ENCODE measurements at regions of chr3 and their contacts with region 1.

Region 1: DNA sequence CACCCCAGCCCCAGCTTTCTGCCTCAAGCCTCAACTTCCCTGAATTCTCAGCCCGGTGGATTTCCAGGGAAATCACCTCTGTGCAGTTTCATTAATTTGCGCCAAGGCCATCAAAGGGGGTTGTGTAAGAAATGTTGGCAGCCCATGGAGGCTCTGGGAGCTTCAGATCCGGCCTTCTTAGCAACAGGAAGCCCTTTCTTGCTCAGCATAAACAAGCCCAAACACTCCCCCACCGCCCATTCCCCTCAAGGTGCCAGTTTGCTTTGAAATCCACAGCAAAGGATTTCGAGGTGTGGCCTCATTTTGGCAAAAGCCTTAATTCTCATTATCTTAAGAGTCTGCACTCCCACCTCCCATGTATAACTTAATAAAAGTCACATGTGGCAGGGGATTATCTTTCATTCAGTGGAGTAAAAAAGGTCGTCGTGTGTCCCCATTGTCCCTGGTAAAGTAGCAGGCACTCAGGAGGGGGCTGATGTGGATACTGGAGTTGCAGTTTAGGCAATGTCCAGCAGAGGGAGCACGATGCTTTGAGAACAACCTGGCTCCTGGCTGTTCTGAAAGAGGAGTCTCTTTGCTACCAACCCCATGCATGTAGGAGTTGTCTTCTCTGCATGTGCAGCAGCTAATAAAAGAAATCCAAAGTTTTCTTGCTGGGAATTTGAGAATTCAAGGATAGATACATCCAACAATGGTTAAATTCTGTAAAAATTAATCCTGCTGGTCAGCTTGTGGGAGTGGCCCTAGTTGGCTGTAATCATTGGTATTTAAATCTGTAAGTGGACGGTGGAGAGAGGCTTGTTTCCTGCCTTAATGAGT is 39.5 kb downstream of the EBLN2 start:
- DNase-seq: no peak
- H3K4me3 ChIP-seq: no peak overlapping the region
- H3K27ac ChIP-seq: peak overlapping the region; percentile 24
- H3K4me1 ChIP-seq: peaks cover 5% of the 10 kb centered on the region
- H3K27me3 ChIP-seq: no peaks in the 10 kb centered on the region
- CTCF ChIP-seq: peak; percentile 89 to 92 (median 92)
- POLR2A ChIP-seq: no peak

Region 2: GRCh38 chr3:73432023-73432705 is 331.2 kb after region 1 on chr3:
- intact Hi-C with region 1: loop called (anchors 10 kb)
- DNase-seq: peak in 1 of 2 donors; percentile 85
- H3K4me3 ChIP-seq: no peak overlapping the region
- H3K27ac ChIP-seq: peak overlapping the region; percentile 16
- H3K4me1 ChIP-seq: peaks cover 53% of the 10 kb centered on the region
- H3K27me3 ChIP-seq: no peaks in the 10 kb centered on the region
- CTCF ChIP-seq: peak in 2 of 3 experiments; percentile 14 to 52
- POLR2A ChIP-seq: no peak

Region 3: GRCh38 chr3:73502609-73503583 is 401.9 kb after region 1 on chr3:
- intact Hi-C with region 1: loop called (anchors 5 kb)
- DNase-seq: no peak
- H3K4me3 ChIP-seq: no peak overlapping the region
- H3K27ac ChIP-seq: no peak overlapping the region
- H3K4me1 ChIP-seq: peaks cover 27% of the 10 kb centered on the region
- H3K27me3 ChIP-seq: no peaks in the 10 kb centered on the region
- CTCF ChIP-seq: peak; percentile 49 to 78 (median 76)
- POLR2A ChIP-seq: no peak